ENCODE measurements at regions of chr5 and their contacts with region 1.

Region 1: DNA sequence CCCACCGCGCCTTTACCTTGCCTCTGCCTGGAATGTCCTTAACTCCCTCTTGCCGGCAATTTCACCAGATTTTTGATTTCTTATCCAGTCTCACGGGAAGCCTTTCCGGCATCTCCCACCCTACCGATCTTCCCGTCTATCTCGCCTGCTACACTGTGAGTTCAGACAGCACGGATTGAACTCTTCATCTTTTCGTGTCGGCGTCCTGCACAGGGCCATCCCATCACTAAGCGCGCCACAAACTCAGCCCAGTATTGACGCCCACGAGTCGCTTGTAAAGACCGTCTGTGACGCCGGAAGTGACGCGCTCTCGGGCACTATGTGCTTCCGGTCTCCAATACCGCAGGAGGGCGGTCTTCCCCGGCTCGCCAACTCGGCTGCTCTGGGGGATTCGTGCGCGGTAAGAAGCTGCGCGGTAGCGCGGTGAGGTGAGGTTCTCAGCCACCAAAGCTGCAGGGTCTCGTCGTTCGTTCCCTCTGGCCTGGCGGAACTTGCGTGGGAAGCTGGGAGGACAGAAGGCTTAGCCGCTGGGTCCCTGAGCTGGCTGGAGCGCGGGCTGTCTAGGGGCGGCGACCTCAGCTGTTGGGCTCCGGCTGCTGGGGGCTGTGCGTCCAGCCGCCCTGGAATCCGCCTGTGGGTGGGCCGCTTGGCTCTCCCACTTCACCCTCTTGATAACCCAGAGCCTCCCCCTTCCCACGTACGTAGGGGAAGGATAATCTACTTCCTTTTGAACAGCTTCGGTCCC is at the start of gene ZCCHC9:
- DNase-seq: peak; percentile 90 to 94 (median 92)
- H3K4me3 ChIP-seq: peak within 1 kb of the TSS; percentile 98 to 99
- H3K4me3 Mint-ChIP-seq: peak within 1 kb of the TSS; percentile 91 to 99 (median 94)
- H3K27ac ChIP-seq: peak within 1 kb of the TSS; percentile 83
- H3K27ac Mint-ChIP-seq: peak within 1 kb of the TSS; percentile 87 to 99 (median 97)
- H3K4me1 ChIP-seq: peaks cover 30% of the 10 kb centered on the region
- H3K4me1 Mint-ChIP-seq: peaks cover 30 to 67% (median 49%) of the 10 kb centered on the region in 4 donors
- H3K27me3 ChIP-seq: no peaks in the 10 kb centered on the region
- H3K27me3 Mint-ChIP-seq: no peaks in the 10 kb centered on the region
- total RNA-seq, gene ZCCHC9: 25.2 to 26.1 TPM

Region 2: GRCh38 chr5:79514391-79515105 is 1786.9 kb before region 1 on chr5:
- CTCF ChIA-PET with region 1: no interaction called
- POLR2A ChIA-PET with region 1: no interaction called
- intact Hi-C with region 1: loop called (anchors 5 kb)
- DNase-seq: peak; percentile 90 to 93 (median 92)
- H3K4me3 ChIP-seq: peak overlapping the region; percentile 71 to 84
- H3K4me3 Mint-ChIP-seq: peak overlapping the region; percentile 96 to 99 (median 96)
- H3K27ac ChIP-seq: peak overlapping the region; percentile 82
- H3K27ac Mint-ChIP-seq: peak overlapping the region; percentile 94 to 100 (median 99)
- H3K4me1 ChIP-seq: peaks cover 18% of the 10 kb centered on the region
- H3K4me1 Mint-ChIP-seq: peaks cover 13 to 25% (median 16%) of the 10 kb centered on the region in 4 donors
- H3K27me3 ChIP-seq: peaks cover 9% of the 10 kb centered on the region
- H3K27me3 Mint-ChIP-seq: peaks cover 15 to 18% of the 10 kb centered on the region in 2 donors

Region 3: GRCh38 chr5:79990598-79991507 is 1310.6 kb before region 1 on chr5 and contains the start of gene MTX3:
- CTCF ChIA-PET with region 1: no interaction called
- POLR2A ChIA-PET with region 1: no interaction called
- intact Hi-C with region 1: no loop called
- DNase-seq: peak; percentile 80 to 90 (median 85)
- H3K4me3 ChIP-seq: peak within 1 kb of the TSS; percentile 63 to 75
- H3K4me3 Mint-ChIP-seq: peak within 1 kb of the TSS; percentile 82 to 93 (median 87)
- H3K27ac ChIP-seq: peak within 1 kb of the TSS; percentile 67
- H3K27ac Mint-ChIP-seq: peak within 1 kb of the TSS; percentile 83 to 96 (median 93)
- H3K4me1 ChIP-seq: peaks cover 23% of the 10 kb centered on the region
- H3K4me1 Mint-ChIP-seq: peaks cover 15 to 23% (median 19%) of the 10 kb centered on the region in 4 donors
- H3K27me3 ChIP-seq: no peaks in the 10 kb centered on the region
- H3K27me3 Mint-ChIP-seq: peaks cover 7% of the 10 kb centered on the region in 2 donors
- total RNA-seq, gene MTX3: 22.7 to 22.9 TPM

Region 4: DNA sequence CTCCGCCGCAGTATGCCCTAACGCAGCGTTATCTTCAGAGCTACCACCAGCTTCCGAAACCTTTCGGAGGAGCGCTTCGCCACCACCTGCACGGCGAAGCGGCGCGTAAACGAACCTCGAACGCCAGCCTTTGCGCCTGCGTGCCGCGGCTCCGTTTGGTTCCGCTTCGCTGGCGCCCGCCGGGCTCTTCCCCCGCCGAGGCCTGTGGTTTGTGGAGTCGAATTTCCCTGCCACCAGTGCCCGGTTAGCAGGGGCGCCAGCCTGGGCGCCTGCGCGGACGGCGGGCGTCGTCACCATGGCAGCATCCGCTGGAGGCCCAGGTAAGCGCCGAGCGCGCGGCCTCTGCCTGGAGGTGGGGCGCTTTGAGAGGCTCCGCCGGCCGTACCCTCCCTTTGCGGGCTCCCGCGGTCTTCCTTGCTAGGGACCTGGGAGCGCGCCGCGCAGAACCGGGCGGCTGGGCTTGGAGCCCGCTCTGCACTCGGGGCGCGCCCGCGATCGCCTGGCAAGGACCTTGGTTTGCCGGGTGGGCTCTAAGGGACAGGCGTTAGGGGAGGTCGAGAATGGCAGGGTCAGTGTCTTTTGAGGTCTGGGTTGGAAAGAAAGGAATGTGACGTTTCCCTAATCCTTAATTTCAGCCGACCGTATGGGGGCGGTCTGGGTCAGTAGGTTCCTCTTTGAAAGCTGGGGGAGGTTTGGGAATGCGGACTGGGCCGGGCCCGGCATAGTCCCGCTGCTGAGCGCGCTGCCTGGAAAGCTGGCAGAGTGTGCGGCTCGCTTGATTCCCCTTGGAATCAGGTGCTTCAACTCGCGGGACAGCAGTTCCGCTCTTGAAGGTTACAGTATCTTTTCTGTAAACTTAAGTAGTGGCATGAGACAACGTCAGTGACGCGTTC is 813.4 kb before region 1 on chr5 and contains the start of gene FAM151B:
- CTCF ChIA-PET with region 1: no interaction called
- POLR2A ChIA-PET with region 1: no interaction called
- intact Hi-C with region 1: loop called (anchors 10 kb)
- DNase-seq: peak; percentile 72 to 80 (median 78)
- H3K4me3 ChIP-seq: peak within 1 kb of the TSS in 1 of 2 donors; percentile 48
- H3K4me3 Mint-ChIP-seq: peak within 1 kb of the TSS; percentile 72 to 90 (median 80)
- H3K27ac ChIP-seq: peak within 1 kb of the TSS; percentile 9
- H3K27ac Mint-ChIP-seq: peak within 1 kb of the TSS; percentile 14 to 89 (median 56)
- H3K4me1 ChIP-seq: peaks cover 15% of the 10 kb centered on the region
- H3K4me1 Mint-ChIP-seq: peaks cover 7 to 20% (median 16%) of the 10 kb centered on the region in 4 donors
- H3K27me3 ChIP-seq: no peaks in the 10 kb centered on the region
- H3K27me3 Mint-ChIP-seq: peaks cover 6 to 10% of the 10 kb centered on the region in 2 donors
- total RNA-seq, gene FAM151B: 0.39 to 0.47 TPM

Region 5: DNA sequence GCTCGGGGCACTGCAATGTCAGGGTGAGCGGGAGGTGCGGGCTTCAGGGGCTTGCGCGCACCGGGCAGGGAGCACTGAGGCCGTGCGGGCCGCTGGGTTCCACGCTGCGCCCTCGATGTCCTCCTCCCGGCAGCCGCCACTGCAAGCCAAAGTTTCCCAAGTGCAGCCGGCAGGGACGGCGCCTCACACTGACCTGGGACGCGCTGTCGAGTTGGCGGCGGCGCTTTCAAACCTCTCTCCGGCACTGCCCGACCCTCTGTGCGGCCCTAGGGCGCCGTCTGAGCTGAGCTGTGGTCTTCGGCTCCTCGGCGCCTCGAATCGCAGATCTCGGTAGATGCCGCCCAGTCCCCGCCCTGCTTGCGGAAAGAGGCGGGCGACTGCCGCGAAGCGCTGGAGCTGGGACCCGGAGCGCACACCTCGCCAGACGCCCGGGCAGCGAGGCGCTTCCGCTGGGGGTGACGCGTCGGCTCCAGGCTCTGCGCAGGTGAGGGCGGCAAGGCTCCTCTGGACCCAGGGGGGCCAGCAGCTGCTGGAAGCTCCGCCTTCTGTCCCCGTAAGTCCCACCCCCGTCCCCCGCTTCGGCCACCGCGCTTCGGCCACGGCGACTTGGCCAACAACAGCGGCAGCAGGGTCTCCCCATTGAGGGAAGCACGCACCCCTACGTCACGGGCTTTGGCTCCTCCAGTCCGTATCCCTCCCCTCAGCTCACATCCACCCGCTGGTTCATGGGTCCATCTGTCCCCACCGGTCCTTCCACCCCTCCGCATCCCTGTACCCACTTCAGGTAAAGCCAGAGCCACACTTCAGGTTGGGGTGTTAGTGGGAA is 731.3 kb before region 1 on chr5 and contains the start of gene ANKRD34B:
- CTCF ChIA-PET with region 1: no interaction called
- POLR2A ChIA-PET with region 1: no interaction called
- intact Hi-C with region 1: no loop called
- DNase-seq: no peak
- H3K4me3 ChIP-seq: no peak within 1 kb of the TSS
- H3K4me3 Mint-ChIP-seq: peak within 1 kb of the TSS; percentile 48 to 86 (median 70)
- H3K27ac ChIP-seq: no peak within 1 kb of the TSS
- H3K27ac Mint-ChIP-seq: no peak within 1 kb of the TSS
- H3K4me1 ChIP-seq: no peaks in the 10 kb centered on the region
- H3K4me1 Mint-ChIP-seq: peaks cover 1 to 13% (median 6%) of the 10 kb centered on the region in 4 donors
- H3K27me3 ChIP-seq: peaks cover 16% of the 10 kb centered on the region
- H3K27me3 Mint-ChIP-seq: peaks cover 49 to 51% of the 10 kb centered on the region in 2 donors
- total RNA-seq, gene ANKRD34B: not detected

Region 6: GRCh38 chr5:80686757-80687156 is 614.7 kb before region 1 on chr5:
- CTCF ChIA-PET with region 1: interaction called, 7 read pairs
- POLR2A ChIA-PET with region 1: no interaction called
- intact Hi-C with region 1: loop called (anchors 5 kb)
- DNase-seq: peak in 4 of 5 donors; percentile 32 to 41 (median 37)
- H3K4me3 ChIP-seq: no peak overlapping the region
- H3K4me3 Mint-ChIP-seq: no peak overlapping the region
- H3K27ac ChIP-seq: no peak overlapping the region
- H3K27ac Mint-ChIP-seq: no peak overlapping the region
- H3K4me1 ChIP-seq: peaks cover 5% of the 10 kb centered on the region
- H3K4me1 Mint-ChIP-seq: peaks cover 13 to 28% (median 19%) of the 10 kb centered on the region in 4 donors
- H3K27me3 ChIP-seq: no peaks in the 10 kb centered on the region
- H3K27me3 Mint-ChIP-seq: no peaks in the 10 kb centered on the region

Region 7: GRCh38 chr5:81105261-81105877 is 196.1 kb before region 1 on chr5:
- CTCF ChIA-PET with region 1: interaction called, 4 read pairs
- POLR2A ChIA-PET with region 1: no interaction called
- intact Hi-C with region 1: loop called (anchors 1 kb)
- DNase-seq: no peak
- H3K4me3 ChIP-seq: no peak overlapping the region
- H3K4me3 Mint-ChIP-seq: peak overlapping the region in 3 of 8 donors; percentile 11 to 31 (median 26)
- H3K27ac ChIP-seq: no peak overlapping the region
- H3K27ac Mint-ChIP-seq: peak overlapping the region; percentile 24 to 72 (median 38)
- H3K4me1 ChIP-seq: peaks cover 18% of the 10 kb centered on the region
- H3K4me1 Mint-ChIP-seq: peaks cover 19 to 23% (median 21%) of the 10 kb centered on the region in 4 donors
- H3K27me3 ChIP-seq: no peaks in the 10 kb centered on the region
- H3K27me3 Mint-ChIP-seq: no peaks in the 10 kb centered on the region

Region 8: GRCh38 chr5:81288021-81288433 is 13.4 kb before region 1 on chr5:
- CTCF ChIA-PET with region 1: interaction called, 20 read pairs
- POLR2A ChIA-PET with region 1: interaction called, 7 read pairs
- intact Hi-C with region 1: no loop called
- DNase-seq: no peak
- H3K4me3 ChIP-seq: no peak overlapping the region
- H3K4me3 Mint-ChIP-seq: peak overlapping the region in 6 of 8 donors; percentile 14 to 62 (median 40)
- H3K27ac ChIP-seq: no peak overlapping the region
- H3K27ac Mint-ChIP-seq: peak overlapping the region in 1 of 7 donors; percentile 29
- H3K4me1 ChIP-seq: peaks cover 32% of the 10 kb centered on the region
- H3K4me1 Mint-ChIP-seq: peaks cover 35 to 66% (median 53%) of the 10 kb centered on the region in 4 donors
- H3K27me3 ChIP-seq: no peaks in the 10 kb centered on the region
- H3K27me3 Mint-ChIP-seq: no peaks in the 10 kb centered on the region

Region 9: GRCh38 chr5:82278095-82278918 is 976.9 kb after region 1 on chr5 and contains the start of gene RPS23:
- CTCF ChIA-PET with region 1: no interaction called
- POLR2A ChIA-PET with region 1: interaction called, 10 read pairs
- intact Hi-C with region 1: loop called (anchors 1 kb)
- DNase-seq: peak; percentile 86 to 89 (median 88)
- H3K4me3 ChIP-seq: peak within 1 kb of the TSS; percentile 84 to 93
- H3K4me3 Mint-ChIP-seq: peak within 1 kb of the TSS; percentile 86 to 99 (median 96)
- H3K27ac ChIP-seq: peak within 1 kb of the TSS; percentile 79
- H3K27ac Mint-ChIP-seq: peak within 1 kb of the TSS; percentile 94 to 99 (median 98)
- H3K4me1 ChIP-seq: peaks cover 23% of the 10 kb centered on the region
- H3K4me1 Mint-ChIP-seq: peaks cover 15 to 48% (median 30%) of the 10 kb centered on the region in 4 donors
- H3K27me3 ChIP-seq: no peaks in the 10 kb centered on the region
- H3K27me3 Mint-ChIP-seq: no peaks in the 10 kb centered on the region
- total RNA-seq, gene RPS23: 2,959 to 3,147 TPM

Measured in CD4-positive, alpha-beta memory T cell (primary cell).